ENCODE measurements at regions of chr5 and their contacts with region 1.

Region 1: DNA sequence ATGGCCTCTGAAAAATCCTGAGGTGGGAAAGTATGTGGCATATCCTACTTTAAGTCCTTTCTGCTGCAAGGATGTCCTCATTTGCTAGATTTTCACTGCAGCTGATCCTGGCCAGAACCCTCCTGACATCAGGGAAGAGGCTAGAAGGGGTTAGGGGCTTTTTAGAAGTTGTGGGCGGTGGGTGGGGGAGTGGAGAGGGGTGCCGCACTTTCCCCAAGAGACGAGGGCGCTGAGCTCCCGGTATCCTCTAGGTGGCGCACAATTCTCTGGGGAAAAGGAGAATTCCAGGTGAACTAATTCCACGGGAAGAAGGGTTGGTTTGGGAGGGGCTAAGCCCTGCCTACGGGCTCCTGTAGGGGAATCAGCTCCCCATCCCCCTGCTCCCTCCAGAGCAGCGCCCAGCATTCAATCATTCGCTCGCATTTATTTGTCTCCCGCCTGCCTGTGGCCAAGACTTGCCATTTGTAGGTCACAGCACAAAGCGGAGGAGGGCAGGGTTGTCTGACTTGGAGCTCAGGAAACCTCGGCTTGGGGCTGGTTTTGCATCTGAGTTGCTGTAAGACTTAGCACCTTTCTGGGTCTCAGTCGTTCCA is 42.9 kb upstream of the HAND1 start:
- DNase-seq: peak; percentile 76
- H3K4me3 Mint-ChIP-seq: no peak overlapping the region
- H3K27ac Mint-ChIP-seq: no peak overlapping the region
- H3K4me1 Mint-ChIP-seq: peaks cover 19% of the 10 kb centered on the region
- H3K27me3 Mint-ChIP-seq: peaks cover 27% of the 10 kb centered on the region
- CTCF ChIP-seq: peak; percentile 86

Region 2: GRCh38 chr5:153974131-153974812 is 546.7 kb before region 1 on chr5:
- CTCF ChIA-PET with region 1: interaction called, 10 read pairs
- POLR2A ChIA-PET with region 1: no interaction called
- intact Hi-C with region 1: no loop called
- DNase-seq: peak; percentile 68
- H3K4me3 Mint-ChIP-seq: no peak overlapping the region
- H3K27ac Mint-ChIP-seq: no peak overlapping the region
- H3K4me1 Mint-ChIP-seq: no peaks in the 10 kb centered on the region
- H3K27me3 Mint-ChIP-seq: peaks cover 21% of the 10 kb centered on the region
- CTCF ChIP-seq: peak; percentile 94

Region 3: DNA sequence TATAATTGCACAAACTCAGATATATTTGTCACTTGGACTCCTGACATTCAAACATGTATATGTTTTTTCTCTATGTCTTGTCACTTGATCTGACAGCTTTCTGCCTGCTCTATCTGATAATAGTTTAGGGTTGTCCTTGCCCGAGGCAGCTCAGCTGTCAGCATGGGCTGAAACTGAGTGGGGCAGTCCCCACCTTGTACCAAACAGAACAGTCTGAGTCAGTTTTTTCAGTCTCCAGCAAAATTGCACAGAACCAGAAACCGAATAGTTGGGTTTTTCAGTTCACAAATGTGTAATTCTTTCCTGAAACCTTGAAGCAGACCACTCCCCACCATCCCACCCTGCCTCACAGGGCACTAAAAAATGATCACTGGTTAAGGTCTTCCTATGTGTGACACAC is 33.4 kb before region 1 on chr5:
- CTCF ChIA-PET with region 1: interaction called, 35 read pairs
- POLR2A ChIA-PET with region 1: no interaction called
- intact Hi-C with region 1: no loop called
- DNase-seq: no peak
- H3K4me3 Mint-ChIP-seq: no peak overlapping the region
- H3K27ac Mint-ChIP-seq: no peak overlapping the region
- H3K4me1 Mint-ChIP-seq: no peaks in the 10 kb centered on the region
- H3K27me3 Mint-ChIP-seq: peaks cover 86% of the 10 kb centered on the region
- CTCF ChIP-seq: no peak

Region 4: DNA sequence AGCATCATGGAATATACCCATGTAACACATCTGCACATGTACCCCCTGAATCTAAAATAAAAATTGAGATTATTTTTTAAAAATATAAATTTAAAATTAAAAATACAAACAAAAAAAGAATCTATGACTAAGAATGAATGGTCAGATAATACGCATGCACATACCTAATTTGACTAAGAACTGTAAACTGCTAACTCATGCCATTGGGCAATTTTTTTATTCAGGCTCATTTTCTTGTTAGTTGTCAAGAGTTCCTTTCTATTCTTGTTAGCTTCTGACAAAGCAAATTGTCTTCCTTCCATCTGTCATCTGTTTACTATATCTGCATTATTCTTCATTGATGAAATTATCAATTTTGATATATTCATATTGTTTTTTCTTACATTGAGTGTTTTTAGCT is 26.6 kb after region 1 on chr5:
- CTCF ChIA-PET with region 1: interaction called, 36 read pairs
- POLR2A ChIA-PET with region 1: no interaction called
- intact Hi-C with region 1: no loop called
- DNase-seq: no peak
- H3K4me3 Mint-ChIP-seq: no peak overlapping the region
- H3K27ac Mint-ChIP-seq: no peak overlapping the region
- H3K4me1 Mint-ChIP-seq: peaks cover 14% of the 10 kb centered on the region
- H3K27me3 Mint-ChIP-seq: peaks cover 62% of the 10 kb centered on the region
- CTCF ChIP-seq: no peak

Region 5: DNA sequence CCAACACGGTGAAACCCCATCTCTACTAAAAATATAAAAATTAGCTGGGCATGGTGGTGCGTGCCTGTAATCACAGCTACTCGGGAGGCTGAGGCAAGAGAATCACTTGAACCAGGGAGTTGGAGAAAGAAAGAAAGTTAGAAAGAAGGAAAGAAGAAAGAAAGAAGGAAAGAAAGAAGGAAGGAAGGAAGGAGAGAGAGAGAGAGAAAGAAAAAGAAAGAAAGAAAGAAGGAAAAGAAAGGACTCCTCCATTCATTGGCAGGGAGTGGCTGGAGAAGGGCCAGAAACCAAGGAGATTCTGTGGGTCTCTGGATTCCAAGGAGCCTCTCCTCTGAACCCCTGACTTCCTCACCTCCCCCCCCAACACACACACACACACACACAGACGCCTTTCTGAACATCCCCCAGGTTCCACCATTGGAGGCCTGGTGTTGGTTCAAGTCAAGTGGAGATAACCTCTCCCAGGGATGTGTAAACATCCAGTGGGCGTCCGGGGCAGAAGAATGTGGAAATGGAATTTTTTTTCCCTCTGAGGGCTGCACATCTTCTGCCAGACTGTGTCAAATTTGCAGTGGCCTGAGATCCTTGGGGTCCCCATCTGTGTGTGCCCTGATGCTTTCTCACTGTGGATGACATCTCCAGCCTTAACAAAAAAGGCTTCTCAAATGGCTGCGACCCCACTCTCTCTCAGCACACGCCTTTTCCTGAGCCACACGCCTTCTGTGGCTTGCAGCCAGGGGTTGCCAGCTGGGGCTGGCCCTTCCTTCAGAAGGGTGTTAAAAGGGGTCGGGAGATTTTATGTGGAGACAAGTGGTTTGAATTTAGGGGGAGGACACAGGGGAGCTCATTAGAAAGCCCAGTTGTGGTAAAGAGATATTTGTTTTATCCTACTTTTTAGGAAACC is 66.4 kb after region 1 on chr5:
- CTCF ChIA-PET with region 1: interaction called, 36 read pairs
- POLR2A ChIA-PET with region 1: interaction called, 3 read pairs
- intact Hi-C with region 1: no loop called
- DNase-seq: no peak
- H3K4me3 Mint-ChIP-seq: no peak overlapping the region
- H3K27ac Mint-ChIP-seq: peak overlapping the region; percentile 8
- H3K4me1 Mint-ChIP-seq: peaks cover 29% of the 10 kb centered on the region
- H3K27me3 Mint-ChIP-seq: no peaks in the 10 kb centered on the region
- CTCF ChIP-seq: no peak

Region 6: DNA sequence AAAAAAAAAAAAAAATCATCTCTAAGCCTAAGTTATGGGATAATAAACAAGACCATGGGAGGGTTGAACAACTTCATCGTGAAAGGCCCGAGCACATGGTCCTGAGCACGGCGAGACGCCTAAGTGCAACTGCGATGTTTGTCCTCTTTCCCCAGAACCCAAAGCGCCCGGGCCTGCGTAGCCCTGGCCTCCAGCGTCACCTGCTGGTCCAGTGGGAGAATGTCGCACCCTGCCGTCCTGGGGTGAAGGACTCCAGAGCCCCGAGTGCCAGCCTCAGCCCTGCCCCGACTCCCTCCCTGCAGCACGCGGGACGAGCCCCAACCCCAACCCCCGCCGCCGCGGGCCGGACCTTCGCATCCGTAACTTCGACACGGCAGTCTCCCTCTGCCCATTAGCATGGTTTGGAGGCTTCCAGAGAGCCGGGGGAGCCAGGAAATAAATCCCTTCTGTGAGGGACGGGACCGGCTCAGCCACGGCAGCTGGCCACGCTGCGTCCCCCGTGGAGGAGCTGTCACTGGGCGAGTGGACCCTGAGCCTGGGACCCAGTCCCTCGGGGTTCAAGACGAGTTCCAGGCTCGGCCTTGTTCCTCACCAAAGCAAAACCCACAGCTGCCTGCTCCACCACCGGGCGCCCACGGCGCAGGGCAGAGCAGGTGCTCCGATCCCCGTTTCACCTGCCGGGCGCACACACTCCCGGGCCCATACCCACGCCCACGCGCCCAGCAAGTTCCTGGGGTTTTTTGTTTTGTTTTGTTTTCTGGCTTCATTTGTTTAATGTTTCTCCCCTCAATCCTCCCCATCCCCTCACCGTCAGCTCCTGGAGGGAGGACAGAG is 89.6 kb after region 1 on chr5:
- CTCF ChIA-PET with region 1: interaction called, 275 read pairs
- POLR2A ChIA-PET with region 1: no interaction called
- intact Hi-C with region 1: loop called (anchors 1 kb)
- DNase-seq: peak; percentile 90
- H3K4me3 Mint-ChIP-seq: peak overlapping the region; percentile 54
- H3K27ac Mint-ChIP-seq: no peak overlapping the region
- H3K4me1 Mint-ChIP-seq: peaks cover 10% of the 10 kb centered on the region
- H3K27me3 Mint-ChIP-seq: peaks cover 39% of the 10 kb centered on the region
- CTCF ChIP-seq: peak; percentile 100

Region 7: GRCh38 chr5:154806176-154806575 is 285.2 kb after region 1 on chr5:
- CTCF ChIA-PET with region 1: no interaction called
- POLR2A ChIA-PET with region 1: no interaction called
- intact Hi-C with region 1: no loop called
- DNase-seq: no peak
- H3K4me3 Mint-ChIP-seq: no peak overlapping the region
- H3K27ac Mint-ChIP-seq: no peak overlapping the region
- H3K4me1 Mint-ChIP-seq: peaks cover 6% of the 10 kb centered on the region
- H3K27me3 Mint-ChIP-seq: no peaks in the 10 kb centered on the region
- CTCF ChIP-seq: no peak